ENCODE measurements at regions of chr11 and their contacts with region 1.

Region 1: DNA sequence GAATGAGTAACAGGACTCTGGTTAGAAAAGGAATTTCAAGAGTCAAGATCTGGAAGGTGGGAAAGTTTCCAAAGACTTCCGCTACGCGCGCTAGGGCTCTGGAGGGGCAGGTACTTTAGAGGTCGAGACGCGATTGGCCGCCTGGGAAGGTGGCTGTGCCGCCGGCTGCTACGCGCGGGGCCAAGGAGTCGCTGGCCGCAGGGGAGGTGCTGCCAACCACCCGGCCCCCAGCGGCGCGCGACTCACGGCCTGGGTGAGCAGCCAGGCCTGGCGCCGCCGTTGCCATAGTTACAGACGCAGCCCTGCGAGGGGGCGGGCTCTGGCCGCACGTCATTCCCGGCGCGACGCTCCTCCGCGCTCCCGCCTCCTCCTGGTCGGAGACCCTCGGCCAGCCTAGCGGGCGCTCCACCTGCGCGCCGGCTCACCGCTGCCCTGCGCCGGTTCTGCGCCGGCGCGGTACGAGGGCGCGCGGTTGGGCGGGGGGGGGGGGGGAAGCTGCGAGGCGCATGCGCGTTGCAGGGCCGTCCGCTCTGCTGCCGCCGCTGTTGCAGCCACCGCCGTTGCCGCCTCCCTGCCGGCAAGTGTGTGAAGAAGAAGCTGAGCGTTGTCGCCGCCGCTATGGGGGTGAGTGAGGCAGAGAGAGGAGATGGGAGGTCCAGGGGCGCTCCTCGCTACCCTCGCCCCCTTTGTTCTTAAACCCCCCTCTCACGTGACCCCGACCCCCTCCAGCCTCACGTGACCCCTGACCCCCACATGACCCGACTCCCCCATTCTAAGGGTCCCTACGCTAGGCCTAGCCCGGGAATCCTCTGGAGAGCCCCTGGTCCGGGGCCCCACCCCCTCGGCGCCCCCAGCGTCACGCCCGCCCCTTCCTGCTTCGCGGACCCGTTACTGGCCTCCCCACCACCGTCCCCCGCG is at the start of gene NAA40:
- DNase-seq: peak; percentile 97 to 99
- H3K4me3 ChIP-seq: peak within 1 kb of the TSS; percentile 77
- H3K27ac ChIP-seq: peak within 1 kb of the TSS; percentile 83
- H3K4me1 ChIP-seq: peaks cover 44% of the 10 kb centered on the region
- H3K27me3 ChIP-seq: no peaks in the 10 kb centered on the region
- CTCF ChIP-seq: no peak
- total RNA-seq, gene NAA40: 47.4 and 50.4 TPM in 2 replicates

Region 2: GRCh38 chr11:62400760-62401159 is 1538.0 kb before region 1 on chr11:
- CTCF ChIA-PET with region 1: no interaction called
- POLR2A ChIA-PET with region 1: interaction called, 10 read pairs
- intact Hi-C with region 1: no loop called
- DNase-seq: peak in 1 of 2 experiments; percentile 61
- H3K4me3 ChIP-seq: no peak overlapping the region
- H3K27ac ChIP-seq: no peak overlapping the region
- H3K4me1 ChIP-seq: 0 out of 2 replicates have a peak, but pooled peaks cover 7% of the 10 kb centered on the region
- H3K27me3 ChIP-seq: no peaks in the 10 kb centered on the region
- CTCF ChIP-seq: no peak

Region 3: GRCh38 chr11:63573881-63574855 is 364.6 kb before region 1 on chr11:
- CTCF ChIA-PET with region 1: no interaction called
- POLR2A ChIA-PET with region 1: no interaction called
- intact Hi-C with region 1: no loop called
- DNase-seq: no peak
- H3K4me3 ChIP-seq: no peak overlapping the region
- H3K27ac ChIP-seq: no peak overlapping the region
- H3K4me1 ChIP-seq: peaks cover 4% of the 10 kb centered on the region
- H3K27me3 ChIP-seq: no peaks in the 10 kb centered on the region
- CTCF ChIP-seq: no peak

Region 4: DNA sequence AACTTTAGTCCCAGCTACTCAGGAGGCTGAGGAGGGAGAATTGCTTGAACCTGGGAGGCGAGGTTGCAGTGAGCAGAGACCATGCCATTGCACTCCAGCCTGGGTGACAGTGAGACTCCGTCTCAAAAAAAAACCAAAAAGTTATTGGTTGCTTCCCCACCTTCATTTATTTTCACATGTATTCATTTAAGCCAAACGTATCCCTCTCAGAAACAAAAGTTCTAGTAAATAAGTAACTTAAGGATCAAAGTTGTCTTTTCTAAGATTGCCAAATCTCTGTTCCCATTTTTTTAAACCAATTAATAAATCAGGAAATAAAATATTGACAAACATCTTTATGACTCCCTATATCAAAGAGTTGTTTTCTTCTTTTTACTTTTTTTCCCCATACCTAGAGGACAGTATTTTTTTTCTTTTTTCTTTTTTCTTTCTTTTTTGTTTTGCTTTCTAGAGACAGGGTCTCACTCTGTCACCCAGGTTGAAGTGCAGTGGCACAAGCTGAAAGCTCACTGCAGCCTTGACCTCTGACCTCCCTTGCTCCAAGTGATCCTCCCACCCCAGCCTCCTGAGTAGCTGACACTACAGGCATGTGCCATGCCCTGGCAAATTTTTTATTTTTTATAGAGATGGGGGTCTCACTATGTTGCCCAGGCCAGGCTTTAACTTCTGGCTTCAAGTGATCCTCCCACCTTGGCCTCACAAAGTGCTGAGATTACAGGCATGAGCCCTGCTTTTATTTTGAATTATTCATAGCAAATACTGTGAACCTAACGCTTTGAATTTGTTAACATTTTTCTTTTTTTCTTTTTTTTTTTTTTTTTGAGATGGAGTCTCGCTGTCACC is 181.6 kb before region 1 on chr11:
- CTCF ChIA-PET with region 1: no interaction called
- POLR2A ChIA-PET with region 1: interaction called, 15 read pairs
- intact Hi-C with region 1: no loop called
- DNase-seq: no peak
- H3K4me3 ChIP-seq: no peak overlapping the region
- H3K27ac ChIP-seq: no peak overlapping the region
- H3K4me1 ChIP-seq: no peaks in the 10 kb centered on the region
- H3K27me3 ChIP-seq: no peaks in the 10 kb centered on the region
- CTCF ChIP-seq: no peak

Region 5: GRCh38 chr11:63871962-63872799 is 66.6 kb before region 1 on chr11:
- CTCF ChIA-PET with region 1: interaction called, 7 read pairs
- POLR2A ChIA-PET with region 1: no interaction called
- intact Hi-C with region 1: loop called (anchors 2 kb)
- DNase-seq: peak; percentile 93 to 99
- H3K4me3 ChIP-seq: peak overlapping the region; percentile 23; the same call in 1 of the 2 replicates
- H3K27ac ChIP-seq: peak overlapping the region; percentile 39
- H3K4me1 ChIP-seq: peaks cover 66% of the 10 kb centered on the region
- H3K27me3 ChIP-seq: no peaks in the 10 kb centered on the region
- CTCF ChIP-seq: peak; percentile 62

Region 6: GRCh38 chr11:63916837-63917691 is 21.7 kb before region 1 on chr11 and contains the start of gene RCOR2:
- CTCF ChIA-PET with region 1: interaction called, 18 read pairs
- POLR2A ChIA-PET with region 1: interaction called, 10 read pairs
- intact Hi-C with region 1: loop called (anchors 1 kb)
- DNase-seq: peak; percentile 62 to 83
- H3K4me3 ChIP-seq: peak within 1 kb of the TSS; percentile 62
- H3K27ac ChIP-seq: no peak within 1 kb of the TSS
- H3K4me1 ChIP-seq: peaks cover 42% of the 10 kb centered on the region
- H3K27me3 ChIP-seq: no peaks in the 10 kb centered on the region
- CTCF ChIP-seq: no peak
- total RNA-seq, gene RCOR2: 3.4 and 5.2 TPM in 2 replicates

Measured in PC-9 (cell line).